ENCODE measurements at regions of chr11 and their contacts with region 1.

Region 1: GRCh38 chr11:131674051-131674755 is 303.8 kb downstream of the NTM start:
- DNase-seq: peak; percentile 64
- H3K4me3 ChIP-seq: no peak overlapping the region
- CTCF ChIP-seq: peak; percentile 98

Region 2: GRCh38 chr11:131025020-131025419 is 649.2 kb before region 1 on chr11:
- CTCF ChIA-PET with region 1: interaction called, 58 read pairs
- POLR2A ChIA-PET with region 1: no interaction called
- DNase-seq: peak; percentile 24
- H3K4me3 ChIP-seq: no peak overlapping the region
- CTCF ChIP-seq: peak; percentile 75

Region 3: DNA sequence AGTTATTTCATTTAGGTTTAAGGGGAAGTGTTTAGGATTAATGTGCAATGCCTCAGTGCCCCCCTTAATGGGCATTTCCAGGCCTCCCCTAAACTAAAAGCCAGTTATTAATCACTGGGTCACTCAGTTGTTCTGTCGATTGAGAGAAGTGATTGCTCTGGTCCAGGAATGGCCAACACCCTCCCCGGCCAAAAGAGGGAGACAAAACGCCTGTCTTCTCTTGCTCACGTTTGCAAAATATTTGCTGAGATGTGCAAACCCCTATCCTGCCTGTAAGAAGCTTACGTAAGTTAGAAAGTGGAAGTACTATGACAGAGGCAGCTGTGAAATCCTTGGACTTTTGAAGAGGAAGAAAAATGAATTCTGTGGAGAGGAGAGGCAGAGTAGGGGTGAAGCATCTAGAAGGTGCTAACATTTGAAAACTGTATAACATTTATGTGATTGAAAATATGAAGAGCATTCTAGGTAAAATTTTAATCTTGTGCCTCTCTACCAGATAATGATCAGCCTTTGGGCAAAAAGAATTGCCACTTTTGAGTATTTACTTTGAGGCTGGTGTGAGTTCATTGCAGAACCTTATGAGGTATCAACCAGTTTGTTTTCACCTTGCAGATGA is 266.1 kb before region 1 on chr11:
- CTCF ChIA-PET with region 1: interaction called, 20 read pairs
- POLR2A ChIA-PET with region 1: no interaction called
- DNase-seq: no peak
- H3K4me3 ChIP-seq: no peak overlapping the region
- CTCF ChIP-seq: peak; percentile 48

Region 4: GRCh38 chr11:131584785-131585592 is 89.2 kb before region 1 on chr11:
- CTCF ChIA-PET with region 1: interaction called, 226 read pairs
- POLR2A ChIA-PET with region 1: interaction called, 18 read pairs
- DNase-seq: no peak
- H3K4me3 ChIP-seq: no peak overlapping the region
- CTCF ChIP-seq: peak; percentile 25

Region 5: GRCh38 chr11:131629925-131630540 is 44.2 kb before region 1 on chr11:
- CTCF ChIA-PET with region 1: interaction called, 13 read pairs
- POLR2A ChIA-PET with region 1: no interaction called
- DNase-seq: no peak
- H3K4me3 ChIP-seq: no peak overlapping the region
- CTCF ChIP-seq: no peak

Region 6: DNA sequence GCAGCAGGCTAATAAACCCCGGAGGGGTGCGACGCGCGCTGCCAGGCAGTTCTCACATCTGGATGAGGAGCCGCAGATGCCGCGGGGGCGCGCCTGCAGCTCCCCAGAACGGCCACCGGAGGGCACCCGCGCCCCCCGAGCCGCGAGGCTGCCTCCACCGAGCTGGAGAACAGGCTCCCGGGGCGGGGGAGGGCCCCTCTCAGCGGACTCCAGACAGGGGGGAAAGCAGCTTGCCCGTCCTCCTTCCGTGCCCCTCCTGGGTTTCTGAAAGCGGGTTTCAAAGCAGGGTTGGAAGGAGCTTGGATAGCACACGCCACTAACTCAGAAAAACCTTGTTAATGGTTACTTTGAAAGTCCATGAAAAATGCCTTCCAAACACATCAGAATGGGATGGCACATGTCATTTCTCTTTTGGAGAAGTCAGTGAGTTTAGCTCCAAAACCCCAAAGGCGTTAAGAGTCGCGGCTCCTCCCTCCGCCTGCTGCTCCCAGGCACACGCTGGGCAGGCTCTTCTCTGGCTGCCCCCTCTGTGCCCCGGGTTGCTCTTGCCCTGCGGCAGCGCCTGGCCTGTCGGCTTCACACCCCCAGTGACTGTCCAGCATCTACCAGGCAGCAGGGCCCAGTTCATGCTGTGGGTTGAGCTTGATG is 14.0 kb after region 1 on chr11:
- CTCF ChIA-PET with region 1: interaction called, 118 read pairs
- POLR2A ChIA-PET with region 1: no interaction called
- DNase-seq: no peak
- H3K4me3 ChIP-seq: peak overlapping the region; percentile 43
- CTCF ChIP-seq: peak; percentile 96

Measured in AG04449 (cell line).